Breast epithelium (tissue), 4 donors: ENCODE measurements at regions of chr14 and their contacts with region 1.

Region 1: GRCh38 chr14:34069854-34070582 is 119.1 kb upstream of the EGLN3 start:
- DNase-seq: no peak
- H3K4me3 ChIP-seq: no peak overlapping the region
- H3K27ac ChIP-seq: no peak overlapping the region
- H3K4me1 ChIP-seq: no peaks in the 10 kb centered on the region
- H3K27me3 ChIP-seq: no peaks in the 10 kb centered on the region
- CTCF ChIP-seq: no peak
- POLR2A ChIP-seq: no peak

Region 2: GRCh38 chr14:34015383-34016024 is 54.5 kb before region 1 on chr14:
- intact Hi-C with region 1: loop called (anchors 2 kb)
- DNase-seq: no peak
- H3K4me3 ChIP-seq: no peak overlapping the region
- H3K27ac ChIP-seq: no peak overlapping the region
- H3K4me1 ChIP-seq: no peaks in the 10 kb centered on the region
- H3K27me3 ChIP-seq: no peaks in the 10 kb centered on the region
- CTCF ChIP-seq: no peak
- POLR2A ChIP-seq: no peak

Region 3: GRCh38 chr14:34051966-34052657 is 17.9 kb before region 1 on chr14:
- intact Hi-C with region 1: no loop called
- DNase-seq: no peak
- H3K4me3 ChIP-seq: no peak overlapping the region
- H3K27ac ChIP-seq: peak overlapping the region; percentile 30 to 51
- H3K4me1 ChIP-seq: peaks cover 0 to 3% of the 10 kb centered on the region in 2 donors
- H3K27me3 ChIP-seq: no peaks in the 10 kb centered on the region
- CTCF ChIP-seq: no peak
- POLR2A ChIP-seq: no peak

Region 4: DNA sequence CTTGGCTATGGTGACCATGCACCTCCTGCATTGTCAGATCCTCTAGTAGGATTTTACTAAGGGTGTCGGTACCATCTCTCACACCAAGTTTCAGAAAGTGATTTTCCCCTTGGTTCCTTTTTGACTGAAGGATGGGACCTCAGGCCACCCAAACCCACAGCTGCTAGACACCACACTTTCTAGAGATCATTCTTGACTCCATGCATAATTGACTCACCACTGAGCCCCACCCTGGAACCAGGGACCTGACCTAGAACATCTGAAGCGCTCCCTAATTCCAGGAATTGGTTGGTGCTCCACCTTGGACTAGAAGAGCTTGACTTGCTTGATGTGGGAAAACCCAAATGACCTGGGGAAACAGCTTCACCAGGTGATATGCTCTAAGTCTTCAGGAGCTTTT is 87.6 kb after region 1 on chr14:
- intact Hi-C with region 1: no loop called
- DNase-seq: no peak
- H3K4me3 ChIP-seq: no peak overlapping the region
- H3K27ac ChIP-seq: no peak overlapping the region
- H3K4me1 ChIP-seq: no peaks in the 10 kb centered on the region
- H3K27me3 ChIP-seq: no peaks in the 10 kb centered on the region
- CTCF ChIP-seq: no peak
- POLR2A ChIP-seq: no peak

Region 5: DNA sequence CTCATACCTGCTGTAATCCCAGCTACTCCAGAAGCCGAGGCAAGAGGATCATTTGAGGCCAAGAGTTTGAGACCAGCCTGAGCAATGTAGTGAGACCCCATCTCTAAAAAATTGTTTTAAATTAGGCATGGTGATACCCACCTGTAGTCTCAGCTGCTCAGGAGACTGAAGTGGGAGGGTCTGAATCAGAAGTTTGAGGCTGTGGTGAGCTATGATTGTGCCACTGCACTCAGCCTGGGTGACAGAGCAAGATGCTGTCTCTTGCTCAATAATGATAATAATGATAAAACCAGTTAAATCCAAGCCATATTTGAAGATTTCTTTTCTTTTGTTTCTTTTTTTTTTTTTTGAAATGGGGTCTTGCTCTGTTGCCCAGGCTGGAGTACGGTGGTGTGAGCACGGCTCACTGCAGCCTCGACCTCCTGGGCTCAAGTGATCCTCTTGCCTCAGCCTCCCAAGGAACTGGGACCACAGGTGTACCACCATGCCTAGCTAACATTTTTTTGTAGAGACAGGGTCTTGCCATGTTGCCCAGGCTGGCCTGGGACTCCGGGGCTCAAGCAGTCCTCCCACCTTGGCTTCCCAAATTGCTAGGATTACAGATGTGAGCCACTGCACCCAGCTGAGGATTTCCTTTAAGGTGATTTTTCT is 1234.9 kb after region 1 on chr14:
- intact Hi-C with region 1: no loop called
- DNase-seq: no peak
- H3K4me3 ChIP-seq: no peak overlapping the region
- H3K27ac ChIP-seq: no peak overlapping the region
- H3K4me1 ChIP-seq: peaks cover 2 to 11% of the 10 kb centered on the region in 2 donors
- H3K27me3 ChIP-seq: no peaks in the 10 kb centered on the region
- CTCF ChIP-seq: no peak
- POLR2A ChIP-seq: no peak